ENCODE measurements at regions of chr3 and their contacts with region 1.

Region 1: GRCh38 chr3:156816800-156817645 is 9.1 kb upstream of the LEKR1 start:
- DNase-seq: peak; percentile 99
- H3K4me3 Mint-ChIP-seq: peak overlapping the region; percentile 94
- H3K27ac Mint-ChIP-seq: peak overlapping the region; percentile 96
- H3K4me1 Mint-ChIP-seq: peaks cover 64% of the 10 kb centered on the region
- H3K27me3 Mint-ChIP-seq: no peaks in the 10 kb centered on the region
- CTCF ChIP-seq: no peak

Region 2: GRCh38 chr3:156542715-156543555 is 274.1 kb before region 1 on chr3:
- CTCF ChIA-PET with region 1: no interaction called
- intact Hi-C with region 1: loop called (anchors 5 kb)
- DNase-seq: no peak
- H3K4me3 Mint-ChIP-seq: no peak overlapping the region
- H3K27ac Mint-ChIP-seq: no peak overlapping the region
- H3K4me1 Mint-ChIP-seq: no peaks in the 10 kb centered on the region
- H3K27me3 Mint-ChIP-seq: no peaks in the 10 kb centered on the region
- CTCF ChIP-seq: no peak

Region 3: DNA sequence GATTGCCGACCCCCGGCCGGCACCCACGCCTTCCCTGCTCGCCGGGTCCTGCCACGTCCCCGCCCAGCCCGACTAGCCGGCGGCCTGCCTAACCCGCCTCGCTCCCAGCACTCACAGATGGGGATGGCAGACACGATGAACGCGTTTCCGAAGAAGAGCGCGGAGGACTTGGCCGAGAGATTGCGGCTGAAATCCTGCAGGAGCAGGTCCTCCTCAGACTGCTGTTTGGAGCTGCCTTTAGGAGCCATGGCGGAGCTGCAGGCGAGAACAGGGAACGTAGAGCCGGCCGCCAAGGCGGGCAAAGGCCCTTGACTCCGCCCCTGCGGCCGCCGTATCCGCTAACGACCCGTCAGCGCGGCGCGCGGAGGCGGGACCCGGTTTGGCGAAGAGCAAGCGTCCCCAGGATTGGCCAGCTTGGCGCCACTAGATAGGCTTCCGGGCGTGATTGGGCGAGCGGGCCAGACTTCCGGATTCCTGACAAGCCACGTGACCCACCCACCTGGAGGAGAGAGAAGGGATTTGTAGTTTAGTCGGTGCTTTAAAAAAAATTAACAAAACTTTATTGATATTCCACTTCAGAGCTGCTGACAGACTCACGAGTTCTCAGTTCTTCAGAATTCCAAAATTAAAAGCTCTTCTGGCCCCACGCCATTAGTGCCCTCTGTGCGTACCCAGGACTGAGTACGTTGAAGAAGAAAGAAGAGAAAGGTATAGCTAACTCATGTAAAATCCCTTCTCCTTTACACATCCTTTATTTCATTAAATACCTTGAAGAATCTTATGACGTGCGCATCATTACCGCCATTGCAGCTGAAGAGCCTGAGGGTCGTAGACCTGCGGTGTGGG is 262.0 kb before region 1 on chr3 and contains the start of gene SSR3:
- CTCF ChIA-PET with region 1: interaction called, 5 read pairs
- intact Hi-C with region 1: loop called (anchors 5 kb)
- DNase-seq: peak; percentile 100
- H3K4me3 Mint-ChIP-seq: peak within 1 kb of the TSS; percentile 87
- H3K27ac Mint-ChIP-seq: peak within 1 kb of the TSS; percentile 90
- H3K4me1 Mint-ChIP-seq: peaks cover 43% of the 10 kb centered on the region
- H3K27me3 Mint-ChIP-seq: no peaks in the 10 kb centered on the region
- CTCF ChIP-seq: peak; percentile 68
- total RNA-seq, gene SSR3: 287 and 312 TPM in 2 replicates

Region 4: DNA sequence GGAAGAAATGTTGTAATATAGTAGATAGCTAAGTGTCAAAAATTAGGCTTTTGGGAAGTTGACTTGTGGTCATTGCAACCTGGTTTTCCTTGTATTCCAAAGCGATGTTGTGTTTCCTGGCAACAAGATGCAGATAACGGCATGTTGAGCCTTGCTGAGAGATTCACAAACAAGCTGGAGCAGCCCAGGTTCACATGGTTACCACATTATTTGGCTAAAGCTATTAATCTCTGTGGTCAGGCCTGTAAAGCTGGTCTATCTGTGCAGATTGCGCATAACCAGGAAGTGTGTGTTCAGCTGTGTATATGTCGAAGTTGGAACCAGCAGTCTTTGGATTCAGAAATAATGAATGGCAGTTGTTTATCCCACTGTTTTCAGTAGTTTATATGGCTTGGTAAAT is 136.0 kb before region 1 on chr3:
- CTCF ChIA-PET with region 1: interaction called, 4 read pairs
- intact Hi-C with region 1: loop called (anchors 2 kb)
- DNase-seq: peak; percentile 84
- H3K4me3 Mint-ChIP-seq: peak overlapping the region; percentile 7
- H3K27ac Mint-ChIP-seq: peak overlapping the region; percentile 88
- H3K4me1 Mint-ChIP-seq: peaks cover 73% of the 10 kb centered on the region
- H3K27me3 Mint-ChIP-seq: no peaks in the 10 kb centered on the region
- CTCF ChIP-seq: no peak

Region 5: GRCh38 chr3:157081681-157082210 is 264.7 kb after region 1 on chr3:
- CTCF ChIA-PET with region 1: interaction called, 5 read pairs
- intact Hi-C with region 1: loop called (anchors 2 kb)
- DNase-seq: peak; percentile 99
- H3K4me3 Mint-ChIP-seq: no peak overlapping the region
- H3K27ac Mint-ChIP-seq: peak overlapping the region; percentile 94
- H3K4me1 Mint-ChIP-seq: peaks cover 46% of the 10 kb centered on the region
- H3K27me3 Mint-ChIP-seq: no peaks in the 10 kb centered on the region
- CTCF ChIP-seq: peak; percentile 100